ENCODE measurements at regions of chr12 and their contacts with region 1.

Region 1: DNA sequence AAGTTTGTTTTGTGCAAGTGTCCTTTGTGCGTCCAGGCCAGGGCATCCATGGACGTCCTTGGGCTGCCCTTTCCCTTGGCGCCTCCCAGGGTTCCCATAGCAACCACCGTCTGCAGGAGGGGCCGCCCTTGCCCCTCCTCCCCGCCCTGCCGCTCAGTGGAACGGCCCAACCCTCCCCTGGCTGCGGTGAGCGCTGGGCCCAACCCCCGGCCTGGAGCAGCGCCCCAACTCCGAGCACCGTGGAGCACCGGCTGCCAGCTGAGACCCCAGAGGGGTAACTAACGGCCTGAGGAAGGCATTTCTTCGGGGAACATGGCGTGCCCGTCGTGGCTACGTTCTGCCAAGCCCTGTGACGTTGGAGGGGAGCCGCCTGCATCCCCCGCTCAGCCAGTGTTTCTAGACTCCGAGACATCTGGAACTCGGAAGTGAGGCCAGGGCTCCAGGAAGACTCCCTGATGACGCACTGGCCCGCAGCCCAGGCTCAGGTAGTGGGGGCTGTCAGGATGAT is 5.3 kb upstream of the ACACB start:
- DNase-seq: peak; percentile 91 to 97
- H3K4me3 ChIP-seq: peak overlapping the region; percentile 60 to 66
- H3K27ac ChIP-seq: peak overlapping the region; percentile 87 to 89
- H3K4me1 ChIP-seq: peaks cover 0 to 37% (median 11%) of the 10 kb centered on the region in 4 donors
- H3K27me3 ChIP-seq: no peaks in the 10 kb centered on the region
- CTCF ChIP-seq: no peak

Region 2: DNA sequence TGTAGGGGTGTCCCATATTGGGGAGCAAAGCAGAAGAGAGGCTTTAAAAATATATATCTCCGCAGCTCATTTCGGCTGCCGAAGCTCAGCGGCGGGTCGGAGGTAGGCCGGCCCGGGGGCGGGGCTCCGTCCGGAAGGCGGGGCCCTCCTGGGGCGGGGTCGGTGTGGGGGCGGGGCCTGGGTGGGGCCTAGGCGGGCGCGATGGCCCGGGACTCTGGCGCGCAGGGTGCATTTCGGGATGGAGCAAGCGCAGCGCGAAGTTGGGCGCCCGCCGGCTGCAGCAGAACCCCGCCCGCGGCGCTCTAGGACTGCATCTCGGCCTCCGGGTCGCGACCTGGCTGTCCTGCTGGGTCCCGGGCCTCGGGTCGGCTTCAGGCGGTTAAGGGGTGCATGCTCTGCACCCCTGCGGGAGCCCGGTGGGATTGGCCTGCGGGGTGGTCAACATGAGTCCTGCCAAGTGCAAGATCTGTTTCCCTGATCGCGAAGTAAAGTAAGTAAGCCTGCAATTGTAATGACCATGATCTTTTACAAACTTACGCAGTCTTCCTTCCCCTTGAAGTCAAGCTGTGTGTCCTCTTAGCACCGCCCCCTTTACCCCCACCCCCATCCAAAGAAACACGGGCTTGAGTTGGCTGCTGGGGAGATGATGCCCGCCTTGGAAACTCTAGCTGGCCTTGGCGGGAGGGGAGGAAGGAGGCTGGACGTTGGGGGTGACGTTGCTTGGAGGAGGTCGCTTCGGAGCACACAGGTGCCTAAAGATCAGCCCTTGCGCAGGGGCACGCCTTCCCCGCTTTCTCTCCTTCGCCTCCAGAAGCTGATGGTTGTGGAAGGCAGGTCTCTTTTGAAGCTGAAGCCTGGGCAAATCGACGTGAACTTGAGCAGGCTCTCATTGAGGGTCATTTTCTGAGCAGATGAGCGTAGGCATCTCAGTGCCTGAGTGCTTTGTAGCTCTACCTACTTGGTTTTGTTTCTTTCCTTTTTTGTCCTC is 43.7 kb after region 1 on chr12:
- intact Hi-C with region 1: loop called (anchors 5 kb)
- DNase-seq: peak; percentile 77 to 92
- H3K4me3 ChIP-seq: peak overlapping the region; percentile 65 to 67
- H3K27ac ChIP-seq: peak overlapping the region; percentile 74 to 79
- H3K4me1 ChIP-seq: peaks cover 0 to 20% (median 17%) of the 10 kb centered on the region in 4 donors
- H3K27me3 ChIP-seq: no peaks in the 10 kb centered on the region
- CTCF ChIP-seq: no peak

Region 3: DNA sequence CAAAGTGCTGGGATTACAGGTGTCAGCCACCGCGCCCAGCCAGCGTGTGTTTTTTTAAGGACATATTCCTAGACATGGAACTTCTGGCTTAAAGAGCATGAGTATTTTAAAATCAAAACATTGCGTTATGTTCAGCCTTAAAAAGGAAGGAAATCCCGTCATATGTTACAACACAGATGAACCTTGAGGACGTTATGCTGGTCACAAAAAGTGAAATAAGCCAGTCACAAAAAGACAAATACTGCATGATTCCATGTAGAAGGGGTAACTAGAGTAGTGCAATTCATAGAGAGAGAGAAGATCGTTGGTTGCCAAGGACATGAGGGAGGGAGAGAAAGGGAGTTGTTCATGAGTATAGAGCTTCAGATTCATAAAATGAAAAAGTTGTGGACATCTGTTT is 59.3 kb after region 1 on chr12:
- intact Hi-C with region 1: no loop called
- DNase-seq: no peak
- H3K4me3 ChIP-seq: no peak overlapping the region
- H3K27ac ChIP-seq: no peak overlapping the region
- H3K4me1 ChIP-seq: no peaks in the 10 kb centered on the region
- H3K27me3 ChIP-seq: no peaks in the 10 kb centered on the region
- CTCF ChIP-seq: no peak